H1 (cell line): ENCODE measurements at regions of chr1 and their contacts with region 1.

Region 1: DNA sequence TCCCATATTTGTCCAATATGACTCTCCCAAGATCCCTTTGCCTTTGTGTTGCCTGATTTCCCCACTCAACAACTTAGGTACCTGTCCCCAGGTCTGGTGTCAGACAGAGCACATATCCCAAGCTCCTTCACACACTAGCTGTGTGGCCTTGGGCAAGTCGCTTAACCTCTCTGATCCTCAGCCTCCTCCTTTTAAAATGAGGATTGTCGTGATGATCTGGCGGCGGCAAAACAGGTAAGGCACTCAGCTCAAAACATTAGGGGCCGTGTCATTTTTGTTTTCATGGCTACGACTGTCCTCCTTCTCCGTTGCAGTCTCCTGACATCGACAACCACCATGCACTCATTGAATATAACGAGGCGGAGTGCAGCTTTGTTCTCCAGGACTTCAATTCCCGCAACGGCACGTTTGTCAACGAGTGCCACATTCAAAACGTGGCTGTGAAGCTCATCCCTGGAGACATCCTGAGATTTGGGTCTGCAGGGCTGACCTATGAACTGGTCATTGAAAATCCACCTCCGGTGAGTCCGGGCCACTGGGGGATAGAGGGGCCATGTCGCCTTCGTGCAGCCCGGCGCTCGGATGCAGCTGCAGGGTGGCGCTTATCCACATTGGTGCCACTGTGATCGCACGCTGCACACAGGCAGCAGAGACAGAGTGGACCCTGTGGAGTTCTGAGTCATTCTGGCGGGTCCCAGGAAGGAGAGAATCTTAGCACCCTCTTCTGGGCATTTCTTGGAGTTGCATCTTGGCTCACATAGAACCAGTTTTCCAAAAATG is 25.2 kb downstream of the FHAD1 start:
- DNase-seq: peak; percentile 23 to 70
- H3K4me3 ChIP-seq: peak overlapping the region in 2 of 4 experiments; percentile 21 to 41; a peak in 3 of 8 replicates
- H3K27ac ChIP-seq: no peak overlapping the region
- H3K4me1 ChIP-seq: peaks cover 0 to 6% (median 0%) of the 10 kb centered on the region in 4 experiments; a peak in 2 of 7 replicates
- H3K27me3 ChIP-seq: peaks cover 0 to 4% (median 1%) of the 10 kb centered on the region in 4 experiments; a peak in 2 of 7 replicates
- CTCF ChIP-seq: peak; percentile 19 to 89 (median 85)
- EP300 ChIP-seq: no peak
- POLR2A ChIP-seq: no peak
- RAD21 ChIP-seq: peak; percentile 92 to 96

Region 2: DNA sequence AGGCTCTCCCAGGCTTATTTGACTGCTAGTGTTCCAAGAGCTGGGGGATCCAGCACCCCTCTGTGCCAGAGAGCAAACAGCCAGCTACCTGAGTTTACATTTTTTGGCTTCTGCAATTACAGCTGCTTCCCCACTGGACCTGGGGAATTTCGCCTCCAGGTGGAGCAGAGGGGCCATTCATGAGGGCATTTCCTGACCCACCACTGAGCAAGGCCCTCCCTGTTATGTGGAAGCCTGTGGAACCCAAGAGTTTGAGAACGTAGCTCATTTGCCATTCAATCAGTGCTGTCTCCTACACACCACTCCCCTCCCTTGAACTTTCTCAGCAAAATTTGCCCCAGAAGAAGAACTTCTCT is 161.3 kb before region 1 on chr1:
- CTCF ChIA-PET with region 1: interaction called, 21 read pairs
- POLR2A ChIA-PET with region 1: no interaction called
- DNase-seq: no peak
- H3K4me3 ChIP-seq: no peak overlapping the region
- H3K27ac ChIP-seq: no peak overlapping the region
- H3K4me1 ChIP-seq: peaks cover 14 to 32% (median 16%) of the 10 kb centered on the region in 4 experiments
- H3K27me3 ChIP-seq: no peaks in the 10 kb centered on the region; a peak in 1 of 7 replicates
- CTCF ChIP-seq: peak; percentile 56 to 63 (median 60)
- EP300 ChIP-seq: no peak
- POLR2A ChIP-seq: no peak
- RAD21 ChIP-seq: peak; percentile 48 to 69

Region 3: DNA sequence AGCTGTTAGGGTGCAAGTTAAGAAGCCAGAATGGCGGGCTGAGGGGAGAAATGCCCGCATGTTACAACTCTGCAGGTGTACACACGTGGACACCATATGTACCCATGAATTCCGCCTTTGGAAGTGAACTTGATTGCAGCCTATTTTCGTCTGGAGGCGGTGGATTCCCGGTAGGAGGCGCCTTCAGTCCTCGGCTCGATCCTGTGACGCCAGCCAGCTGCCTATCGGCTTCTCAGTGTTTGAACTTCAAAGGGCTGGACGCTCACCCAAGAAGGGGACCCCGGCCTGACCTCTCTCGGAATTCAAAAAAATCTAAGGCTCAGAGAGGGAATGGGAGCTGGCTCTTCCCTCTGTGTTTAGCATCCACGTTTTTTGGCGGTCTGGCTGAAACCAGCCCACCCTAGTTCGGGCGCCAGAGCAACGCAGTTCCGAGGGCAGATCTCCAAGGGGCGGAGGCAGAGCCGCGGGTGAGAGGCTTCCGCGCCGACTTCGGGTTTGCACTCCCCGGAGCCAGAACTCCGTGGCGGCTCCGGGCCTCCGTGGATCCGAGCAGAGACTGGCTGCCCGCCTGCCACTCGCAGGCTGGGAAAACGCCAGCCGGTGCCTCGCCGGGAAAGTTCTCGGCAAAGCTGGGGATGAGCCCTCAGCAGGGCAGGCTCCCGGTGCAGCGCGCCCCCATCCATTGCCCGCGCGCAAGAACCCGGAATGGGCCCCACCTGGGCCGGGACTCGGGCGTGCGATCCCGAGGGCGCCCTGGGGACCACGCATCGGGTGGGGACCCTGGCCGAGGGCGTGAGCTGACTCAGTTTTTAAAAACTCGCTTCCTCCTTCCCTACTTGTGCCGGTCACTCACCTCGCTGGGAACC is 119.6 kb before region 1 on chr1:
- CTCF ChIA-PET with region 1: interaction called, 83 read pairs
- POLR2A ChIA-PET with region 1: interaction called, 3 read pairs
- DNase-seq: peak in 1 of 2 experiments; percentile 83
- H3K4me3 ChIP-seq: peak overlapping the region; percentile 59 to 84 (median 74)
- H3K27ac ChIP-seq: no peak overlapping the region
- H3K4me1 ChIP-seq: peaks cover 3 to 15% (median 8%) of the 10 kb centered on the region in 4 experiments
- H3K27me3 ChIP-seq: peaks cover 0 to 23% (median 10%) of the 10 kb centered on the region in 4 experiments; a peak in 6 of 7 replicates
- CTCF ChIP-seq: peak; percentile 62 to 69 (median 65)
- EP300 ChIP-seq: no peak
- POLR2A ChIP-seq: no peak; a peak in 1 of 3 replicates
- RAD21 ChIP-seq: peak; percentile 68 to 82

Region 4: DNA sequence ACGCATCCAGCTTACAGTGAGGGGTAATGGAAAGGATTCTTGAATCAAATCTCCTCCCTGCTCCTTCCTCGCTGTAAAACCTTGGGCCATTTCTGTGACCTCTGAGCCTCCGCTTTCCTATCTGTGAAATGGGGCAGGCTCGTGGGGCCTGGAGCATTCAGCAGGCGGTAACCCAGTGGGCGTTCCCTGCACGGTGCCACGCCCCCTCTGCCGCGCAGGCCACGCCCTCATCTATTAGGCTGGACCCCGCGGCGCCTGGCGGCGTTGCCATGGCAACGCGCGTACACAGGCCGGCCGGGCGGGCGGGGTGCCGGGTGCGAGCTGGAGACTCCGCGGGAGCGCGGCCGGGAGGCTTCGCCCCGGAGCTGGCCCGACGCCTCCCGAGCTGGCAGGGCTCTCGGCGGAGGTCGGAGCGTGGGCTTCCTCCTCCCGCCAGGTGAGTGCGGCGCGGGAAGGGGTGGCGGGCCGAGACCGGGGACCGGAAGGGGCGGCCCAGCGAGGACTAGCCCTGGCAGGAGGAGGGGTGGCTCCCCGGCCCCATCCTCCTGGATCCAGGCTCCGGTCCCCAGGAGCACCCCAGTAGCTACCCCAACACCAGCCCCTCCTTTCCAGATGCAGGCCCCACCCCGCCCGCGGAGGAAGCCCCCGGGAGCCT is 25.1 kb before region 1 on chr1 and contains the start of gene FHAD1:
- CTCF ChIA-PET with region 1: interaction called, 16 read pairs
- POLR2A ChIA-PET with region 1: no interaction called
- DNase-seq: peak; percentile 68 to 94
- H3K4me3 ChIP-seq: peak within 1 kb of the TSS; percentile 75 to 83 (median 77)
- H3K27ac ChIP-seq: peak within 1 kb of the TSS; percentile 67; the same call in 1 of the 2 replicates
- H3K4me1 ChIP-seq: peaks cover 0 to 10% (median 2%) of the 10 kb centered on the region in 4 experiments; a peak in 5 of 7 replicates
- H3K27me3 ChIP-seq: no peaks in the 10 kb centered on the region
- CTCF ChIP-seq: no peak
- EP300 ChIP-seq: no peak
- POLR2A ChIP-seq: no peak
- RAD21 ChIP-seq: no peak
- total RNA-seq, gene FHAD1: 0.69 and 1.5 TPM in 2 replicates

Region 5: DNA sequence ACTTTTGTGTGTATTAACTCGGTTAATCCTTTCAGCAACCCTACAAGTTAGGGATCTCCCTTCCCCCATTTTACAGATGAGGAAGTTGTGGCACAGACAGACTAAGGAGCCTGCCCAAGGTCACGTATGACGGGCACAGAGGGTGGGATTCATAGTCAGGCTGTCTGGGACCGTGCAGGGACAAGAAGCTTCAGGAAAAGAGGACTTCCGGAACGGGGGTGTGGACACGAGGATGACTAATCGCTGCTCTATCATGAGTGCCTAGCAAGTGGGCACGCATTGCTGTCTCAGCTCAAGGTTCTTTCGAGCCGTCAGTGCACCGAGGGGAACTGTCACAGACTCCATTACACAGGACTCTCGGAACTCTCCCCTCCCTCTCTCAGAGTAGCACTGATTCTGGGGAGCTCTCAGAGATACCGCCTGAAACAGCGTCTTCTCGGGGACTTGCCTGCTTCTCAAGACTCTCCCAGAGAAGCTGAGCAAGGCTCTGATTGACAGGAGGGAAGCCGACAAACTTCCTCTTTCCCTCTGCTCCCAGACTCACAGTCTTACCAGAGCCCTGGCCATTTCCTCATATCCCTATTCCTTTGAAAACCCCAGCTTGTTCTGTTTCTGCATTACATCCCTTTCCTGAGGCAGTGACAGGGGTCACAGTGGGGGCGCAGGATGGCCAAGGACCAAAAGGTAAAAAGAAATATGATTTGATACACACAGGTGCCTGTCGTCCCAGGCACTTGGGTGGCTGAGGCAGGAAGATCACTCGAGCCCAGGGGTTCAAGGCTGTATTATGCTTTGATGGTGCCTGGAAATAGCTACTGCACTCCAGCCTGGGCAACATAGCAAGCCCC is 10.8 kb before region 1 on chr1:
- CTCF ChIA-PET with region 1: interaction called, 45 read pairs
- POLR2A ChIA-PET with region 1: no interaction called
- DNase-seq: peak in 1 of 2 experiments; percentile 46
- H3K4me3 ChIP-seq: no peak overlapping the region
- H3K27ac ChIP-seq: no peak overlapping the region
- H3K4me1 ChIP-seq: peaks cover 0 to 4% (median 2%) of the 10 kb centered on the region in 4 experiments; a peak in 3 of 7 replicates
- H3K27me3 ChIP-seq: no peaks in the 10 kb centered on the region
- CTCF ChIP-seq: no peak
- EP300 ChIP-seq: no peak
- POLR2A ChIP-seq: no peak
- RAD21 ChIP-seq: no peak